MCF 10A (cell line): ENCODE measurements at regions of chr2 and their contacts with region 1.

Region 1: GRCh38 chr2:37083873-37084794 is at the starts of genes GPATCH11 and HEATR5B:
- DNase-seq: peak; percentile 97
- H3K4me3 Mint-ChIP-seq: no peak within 1 kb of the TSS
- H3K27ac Mint-ChIP-seq: no peak within 1 kb of the TSS
- H3K4me1 Mint-ChIP-seq: peaks cover 30% of the 10 kb centered on the region
- H3K27me3 Mint-ChIP-seq: no peaks in the 10 kb centered on the region
- CTCF ChIP-seq: no peak
- total RNA-seq, gene GPATCH11: 5.5 and 5.9 TPM in 2 replicates
- total RNA-seq, gene HEATR5B: 14.5 and 14.8 TPM in 2 replicates

Region 2: DNA sequence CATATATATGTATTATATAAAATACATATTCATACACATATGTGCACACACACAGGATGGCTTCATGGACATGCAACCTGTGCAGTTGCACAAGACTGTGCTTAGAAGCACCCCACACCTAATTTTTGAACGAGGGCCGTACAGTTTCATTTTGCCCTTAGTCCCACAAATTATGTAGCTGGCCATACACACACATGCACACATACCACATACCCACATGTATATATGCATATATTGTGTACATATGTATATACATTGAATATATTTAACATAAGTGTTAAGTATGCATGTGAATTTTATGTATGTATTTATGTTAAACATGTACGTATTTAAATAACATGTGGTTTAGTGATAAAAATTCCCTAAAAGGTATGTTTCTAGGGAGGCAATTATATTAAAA is 18.5 kb after region 1 on chr2:
- CTCF ChIA-PET with region 1: no interaction called
- POLR2A ChIA-PET with region 1: interaction called, 16 read pairs
- intact Hi-C with region 1: no loop called
- DNase-seq: no peak
- H3K4me3 Mint-ChIP-seq: no peak overlapping the region
- H3K27ac Mint-ChIP-seq: no peak overlapping the region
- H3K4me1 Mint-ChIP-seq: no peaks in the 10 kb centered on the region
- H3K27me3 Mint-ChIP-seq: no peaks in the 10 kb centered on the region
- CTCF ChIP-seq: no peak

Region 3: DNA sequence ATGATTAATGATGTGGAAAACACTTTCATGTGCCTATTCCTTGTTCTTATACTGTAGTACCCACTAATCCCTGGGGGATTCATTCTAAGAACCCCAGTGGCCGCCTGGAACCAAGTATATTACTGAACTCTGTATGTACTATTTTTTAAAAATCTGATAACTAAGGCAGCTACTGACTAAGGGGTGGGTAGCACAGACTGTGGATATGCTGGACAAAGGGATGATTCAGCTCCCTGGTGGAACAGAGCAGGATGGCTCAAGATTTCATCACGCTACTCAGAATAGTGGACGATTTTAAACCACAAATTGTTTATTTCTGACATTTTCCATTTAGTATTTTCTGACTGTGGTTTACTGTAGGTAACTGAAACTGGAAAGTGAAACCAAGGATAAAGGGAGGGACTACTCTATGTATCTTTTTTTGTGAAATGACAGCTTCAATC is 629.1 kb after region 1 on chr2:
- CTCF ChIA-PET with region 1: no interaction called
- POLR2A ChIA-PET with region 1: no interaction called
- intact Hi-C with region 1: no loop called
- DNase-seq: peak; percentile 61
- H3K4me3 Mint-ChIP-seq: no peak overlapping the region
- H3K27ac Mint-ChIP-seq: peak overlapping the region; percentile 46
- H3K4me1 Mint-ChIP-seq: peaks cover 20% of the 10 kb centered on the region
- H3K27me3 Mint-ChIP-seq: no peaks in the 10 kb centered on the region
- CTCF ChIP-seq: no peak